Activated CD4-positive, alpha-beta T cell treated with anti-CD3 and anti-CD28 coated beads, Interleukin-2, amount 10 ng/mL, durations not matched to agents 24 days and 14 days (primary cell): ENCODE measurements at regions of chr7 and their contacts with region 1.

Region 1: GRCh38 chr7:116588641-116589594 is 64.1 kb downstream of the CAV1 start:
- DNase-seq: peak; percentile 62
- H3K4me3 Mint-ChIP-seq: no peak overlapping the region
- H3K27ac Mint-ChIP-seq: peak overlapping the region; percentile 9
- H3K4me1 Mint-ChIP-seq: peaks cover 25% of the 10 kb centered on the region
- H3K27me3 Mint-ChIP-seq: peaks cover 26% of the 10 kb centered on the region

Region 2: DNA sequence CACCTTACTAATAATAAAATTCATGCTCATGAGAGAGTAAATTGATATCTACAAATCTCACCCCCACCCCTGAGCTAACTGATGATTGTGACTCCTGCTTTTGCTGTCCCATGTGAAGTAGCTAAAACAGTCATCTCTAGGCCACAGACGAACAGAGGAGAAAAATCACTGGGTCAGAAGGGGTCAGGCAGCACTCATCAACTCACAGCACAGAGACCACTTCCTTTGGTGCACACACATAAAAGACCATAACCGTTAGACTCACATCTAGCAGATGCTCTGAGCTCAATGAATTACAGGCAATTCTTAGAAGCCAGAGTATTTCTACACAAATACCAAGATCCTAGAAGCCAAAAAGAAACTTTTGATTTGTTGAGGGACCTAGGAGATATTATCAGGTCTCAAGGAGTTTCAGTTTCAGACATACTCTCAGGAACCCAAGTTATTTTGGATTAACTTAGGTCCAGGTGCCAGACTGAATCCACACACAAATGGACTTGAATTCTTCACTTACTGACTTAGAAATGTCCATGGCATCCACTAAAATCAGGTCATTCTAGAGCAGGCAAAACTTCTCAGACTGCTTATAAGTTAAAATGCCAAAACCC is 443.6 kb before region 1 on chr7:
- intact Hi-C with region 1: loop called (anchors 5 kb)
- DNase-seq: peak; percentile 76
- H3K4me3 Mint-ChIP-seq: peak overlapping the region; percentile 44
- H3K27ac Mint-ChIP-seq: peak overlapping the region; percentile 77
- H3K4me1 Mint-ChIP-seq: peaks cover 44% of the 10 kb centered on the region
- H3K27me3 Mint-ChIP-seq: peaks cover 7% of the 10 kb centered on the region

Region 3: DNA sequence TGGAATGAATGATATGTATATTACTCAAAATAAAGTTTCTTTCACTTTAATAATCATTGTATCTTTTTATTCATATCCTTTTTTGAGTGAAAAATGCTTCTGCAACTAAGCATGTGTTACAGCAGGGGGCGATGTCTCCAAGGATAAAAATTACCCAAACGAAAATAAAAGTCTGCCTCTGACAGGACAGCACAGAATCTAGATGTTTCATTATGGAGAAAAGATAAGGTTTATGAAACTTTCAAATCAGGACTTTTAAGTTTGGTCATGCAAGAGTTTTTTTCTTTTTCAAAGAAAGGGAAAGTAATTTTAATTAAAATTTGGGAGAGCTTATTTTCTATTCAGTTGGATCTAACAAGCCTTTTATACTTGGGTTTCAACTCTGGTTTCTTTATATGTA is 330.2 kb before region 1 on chr7:
- intact Hi-C with region 1: loop called (anchors 1 kb)
- DNase-seq: peak; percentile 76
- H3K4me3 Mint-ChIP-seq: no peak overlapping the region
- H3K27ac Mint-ChIP-seq: no peak overlapping the region
- H3K4me1 Mint-ChIP-seq: peaks cover 3% of the 10 kb centered on the region
- H3K27me3 Mint-ChIP-seq: peaks cover 1% of the 10 kb centered on the region

Region 4: GRCh38 chr7:116576350-116577319 is 12.3 kb before region 1 on chr7:
- intact Hi-C with region 1: loop called (anchors 1 kb)
- DNase-seq: no peak
- H3K4me3 Mint-ChIP-seq: no peak overlapping the region
- H3K27ac Mint-ChIP-seq: no peak overlapping the region
- H3K4me1 Mint-ChIP-seq: peaks cover 5% of the 10 kb centered on the region
- H3K27me3 Mint-ChIP-seq: peaks cover 9% of the 10 kb centered on the region

Region 5: DNA sequence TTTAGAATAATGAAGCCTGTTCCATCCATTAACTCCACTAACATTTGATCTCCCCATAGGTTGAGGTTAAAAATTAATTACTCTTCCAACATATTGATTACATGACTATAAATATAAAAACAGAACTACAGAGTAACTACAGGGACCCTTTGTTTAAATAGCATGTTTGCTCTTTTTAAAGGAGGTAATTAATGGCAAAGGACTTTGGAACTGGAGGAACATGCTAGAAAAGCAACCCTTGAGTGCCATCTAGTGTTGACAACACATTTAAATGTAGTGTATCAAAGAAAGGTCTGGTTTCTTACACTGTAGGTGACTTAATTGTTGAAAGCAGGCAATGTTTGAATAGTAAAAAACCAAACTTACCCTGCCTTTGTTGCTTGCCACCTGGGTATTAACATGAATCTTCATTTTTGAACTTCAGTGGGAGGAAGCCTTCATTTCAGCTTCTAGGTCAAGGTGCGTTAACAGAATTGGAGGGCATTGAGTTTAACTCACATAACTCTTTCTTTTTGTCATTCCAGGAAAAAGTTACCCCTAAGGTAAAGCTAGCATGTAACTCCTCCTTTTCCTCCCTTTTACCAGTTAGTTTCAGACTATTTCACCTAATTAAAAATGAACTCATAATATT is 220.8 kb after region 1 on chr7:
- intact Hi-C with region 1: loop called (anchors 1 kb)
- DNase-seq: peak; percentile 71
- H3K4me3 Mint-ChIP-seq: no peak overlapping the region
- H3K27ac Mint-ChIP-seq: no peak overlapping the region
- H3K4me1 Mint-ChIP-seq: no peaks in the 10 kb centered on the region
- H3K27me3 Mint-ChIP-seq: peaks cover 11% of the 10 kb centered on the region